ENCODE measurements at regions of chr3 and their contacts with region 1.

Region 1: GRCh38 chr3:9809615-9810432 is at the start of gene TTLL3:
- DNase-seq: peak; percentile 22 to 72 (median 38)
- ATAC-seq: peak; percentile 66
- H3K4me3 ChIP-seq: peak within 1 kb of the TSS; percentile 68
- H3K4me3 Mint-ChIP-seq: peak within 1 kb of the TSS; percentile 88
- H3K27ac ChIP-seq: peak within 1 kb of the TSS; percentile 70 to 85
- H3K27ac Mint-ChIP-seq: peak within 1 kb of the TSS; percentile 83
- H3K4me1 ChIP-seq: peaks cover 35% of the 10 kb centered on the region
- H3K4me1 Mint-ChIP-seq: peaks cover 40% of the 10 kb centered on the region
- H3K27me3 ChIP-seq: no peaks in the 10 kb centered on the region
- H3K27me3 Mint-ChIP-seq: no peaks in the 10 kb centered on the region
- CTCF ChIP-seq: no peak
- total RNA-seq, gene TTLL3: 50.5 to 58.6 TPM

Region 2: GRCh38 chr3:9749645-9750555 is 59.9 kb before region 1 on chr3 and contains the start of gene OGG1:
- CTCF ChIA-PET with region 1: no interaction called
- POLR2A ChIA-PET with region 1: interaction called, 7 read pairs
- intact Hi-C with region 1: loop called in 1 of 2 experiments (anchors 5 kb)
- DNase-seq: peak; percentile 84 to 98 (median 91)
- ATAC-seq: peak; percentile 94
- H3K4me3 ChIP-seq: peak within 1 kb of the TSS; percentile 82
- H3K4me3 Mint-ChIP-seq: peak within 1 kb of the TSS; percentile 95
- H3K27ac ChIP-seq: peak within 1 kb of the TSS; percentile 69 to 74
- H3K27ac Mint-ChIP-seq: peak within 1 kb of the TSS; percentile 85
- H3K4me1 ChIP-seq: peaks cover 37% of the 10 kb centered on the region
- H3K4me1 Mint-ChIP-seq: peaks cover 48% of the 10 kb centered on the region
- H3K27me3 ChIP-seq: no peaks in the 10 kb centered on the region
- H3K27me3 Mint-ChIP-seq: no peaks in the 10 kb centered on the region
- CTCF ChIP-seq: no peak
- total RNA-seq, gene OGG1: 7.1 to 8.9 TPM

Region 3: DNA sequence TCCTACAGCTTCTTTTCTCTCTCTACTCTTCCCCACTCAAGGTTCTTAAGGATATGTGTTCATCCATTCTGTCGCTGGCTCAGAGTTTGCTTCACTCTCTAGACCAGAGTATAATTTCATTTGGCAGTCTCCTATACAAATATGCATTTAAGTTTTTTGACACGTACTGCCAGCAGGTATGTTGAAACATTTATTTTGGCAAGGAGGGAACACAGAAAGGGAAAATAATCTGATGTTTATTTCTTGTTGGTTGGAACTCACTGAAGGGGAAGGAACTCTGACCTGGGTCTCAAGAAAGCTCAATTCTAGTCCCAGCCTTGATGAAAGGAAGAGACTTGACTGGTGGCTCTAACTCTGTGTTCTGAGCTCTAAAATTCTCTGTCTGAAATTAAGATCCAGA is 238.1 kb after region 1 on chr3:
- CTCF ChIA-PET with region 1: no interaction called
- POLR2A ChIA-PET with region 1: no interaction called
- intact Hi-C with region 1: no loop called
- DNase-seq: no peak
- ATAC-seq: no peak
- H3K4me3 ChIP-seq: no peak overlapping the region
- H3K4me3 Mint-ChIP-seq: no peak overlapping the region
- H3K27ac ChIP-seq: no peak overlapping the region
- H3K27ac Mint-ChIP-seq: no peak overlapping the region
- H3K4me1 ChIP-seq: no peaks in the 10 kb centered on the region
- H3K4me1 Mint-ChIP-seq: no peaks in the 10 kb centered on the region
- H3K27me3 ChIP-seq: no peaks in the 10 kb centered on the region
- H3K27me3 Mint-ChIP-seq: no peaks in the 10 kb centered on the region
- CTCF ChIP-seq: no peak

Measured in CD4-positive, alpha-beta T cell (primary cell).